IMR-90 (cell line): ENCODE measurements at regions of chr5 and their contacts with region 1.

Region 1: DNA sequence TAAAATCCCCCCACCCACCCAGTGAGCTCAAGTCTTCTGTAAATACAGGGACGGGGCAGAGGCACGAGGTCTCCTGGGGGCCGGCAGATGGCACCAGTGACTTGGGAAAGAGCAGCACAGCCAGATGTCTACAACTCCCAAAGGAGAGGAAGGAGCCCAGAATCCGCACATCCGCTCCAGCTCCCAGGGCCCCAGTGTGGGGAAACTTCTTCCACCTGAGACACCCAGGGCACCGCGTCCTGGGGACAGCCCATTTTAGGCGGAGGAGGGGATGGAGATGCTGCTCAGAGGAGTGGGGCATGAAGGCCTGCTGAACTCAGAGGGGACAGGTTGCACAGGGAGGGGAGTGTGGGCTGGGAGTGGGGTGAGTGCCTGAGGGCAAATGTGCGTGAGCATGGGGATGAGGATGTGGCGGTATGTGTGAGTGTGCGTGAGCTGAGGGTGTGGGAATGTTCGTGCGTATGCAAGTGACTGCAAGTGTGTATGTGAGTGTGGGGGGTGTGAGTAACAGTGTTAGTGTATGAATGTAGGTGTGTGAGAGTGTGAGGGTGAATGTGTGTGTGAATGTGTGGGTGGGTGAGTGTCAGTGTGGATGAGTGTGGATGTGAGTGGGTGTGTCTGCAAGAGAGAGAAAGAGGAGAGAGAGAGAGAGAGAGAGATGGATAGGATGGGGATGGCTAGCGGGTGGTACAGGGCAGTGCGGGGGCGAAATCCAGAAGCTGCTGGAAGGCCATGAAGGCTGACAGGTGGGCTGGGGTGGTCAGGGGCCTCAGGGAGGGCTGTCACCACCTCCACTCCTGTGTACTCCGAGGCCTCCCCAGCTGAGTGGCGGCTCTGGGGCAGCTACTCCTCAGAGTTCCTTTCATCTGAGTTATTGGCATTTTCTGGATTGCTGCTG is 63.5 kb downstream of the DUSP1 start:
- DNase-seq: peak; percentile 76
- ATAC-seq: peak; percentile 96
- H3K4me3 ChIP-seq: no peak overlapping the region
- H3K27ac ChIP-seq: no peak overlapping the region
- H3K4me1 ChIP-seq: peaks cover 4% of the 10 kb centered on the region
- H3K27me3 ChIP-seq: peaks cover 10% of the 10 kb centered on the region
- CTCF ChIP-seq: peak; percentile 72
- POLR2A ChIP-seq: no peak
- RAD21 ChIP-seq: peak; percentile 89

Region 2: GRCh38 chr5:172984243-172984953 is 276.9 kb after region 1 on chr5:
- CTCF ChIA-PET with region 1: interaction called, 3 read pairs
- POLR2A ChIA-PET with region 1: no interaction called
- dilution Hi-C with region 1: no loop called
- in situ Hi-C with region 1: no loop called
- intact Hi-C with region 1: loop called (anchors 5 kb)
- DNase-seq: peak; percentile 92
- ATAC-seq: peak; percentile 65
- H3K4me3 ChIP-seq: peak overlapping the region; percentile 86
- H3K27ac ChIP-seq: peak overlapping the region; percentile 92
- H3K4me1 ChIP-seq: peaks cover 2% of the 10 kb centered on the region; the same call in 1 of the 2 replicates
- H3K27me3 ChIP-seq: no peaks in the 10 kb centered on the region
- CTCF ChIP-seq: peak; percentile 66
- POLR2A ChIP-seq: peak; percentile 58; the same call in 1 of the 2 replicates
- RAD21 ChIP-seq: peak; percentile 79

Region 3: DNA sequence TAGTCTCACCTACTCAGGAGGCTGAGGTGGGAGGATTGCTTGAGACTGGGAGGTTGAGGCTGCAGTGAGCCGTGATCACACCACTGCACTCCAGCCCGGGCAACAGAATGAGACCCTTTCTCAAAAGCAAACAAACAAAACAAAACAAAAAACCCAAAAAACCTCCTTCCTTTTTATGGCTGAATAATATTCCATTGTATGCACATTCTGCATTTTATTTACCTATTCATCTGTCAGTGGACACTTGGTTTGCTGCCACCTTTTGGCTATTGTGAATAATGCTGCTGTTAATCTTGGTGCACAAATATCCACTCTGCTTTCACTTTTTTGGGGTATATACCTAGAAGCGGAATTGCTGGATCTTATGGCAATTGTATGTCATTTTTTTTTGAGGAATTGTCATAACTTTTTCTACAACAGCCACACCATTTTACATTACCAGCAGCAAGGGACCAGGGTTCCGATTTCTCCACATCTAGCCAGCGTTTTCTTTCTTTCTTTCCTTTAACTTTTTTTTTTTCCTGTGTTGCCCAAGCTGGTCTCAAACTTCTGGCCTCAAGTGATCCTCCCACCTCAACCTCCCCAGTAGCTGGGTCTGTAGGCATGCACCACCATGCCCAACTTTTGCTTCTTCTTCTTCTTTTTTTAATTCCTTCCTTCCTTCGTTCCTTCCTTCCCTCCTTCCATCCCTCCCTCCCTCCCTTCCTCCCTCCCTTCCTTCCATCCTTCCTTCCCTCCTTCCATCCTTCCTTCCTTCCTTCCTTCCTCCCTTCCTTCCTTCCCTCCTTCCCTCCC is 496.8 kb after region 1 on chr5:
- CTCF ChIA-PET with region 1: no interaction called
- POLR2A ChIA-PET with region 1: no interaction called
- dilution Hi-C with region 1: no loop called
- in situ Hi-C with region 1: no loop called
- intact Hi-C with region 1: loop called (anchors 2 kb)
- DNase-seq: peak; percentile 33
- ATAC-seq: no peak
- H3K4me3 ChIP-seq: no peak overlapping the region
- H3K27ac ChIP-seq: no peak overlapping the region
- H3K4me1 ChIP-seq: peaks cover 6% of the 10 kb centered on the region; the same call in 1 of the 2 replicates
- H3K27me3 ChIP-seq: peaks cover 48% of the 10 kb centered on the region
- CTCF ChIP-seq: peak; percentile 61
- POLR2A ChIP-seq: no peak
- RAD21 ChIP-seq: peak; percentile 49

Region 4: GRCh38 chr5:173293817-173294672 is 586.5 kb after region 1 on chr5:
- CTCF ChIA-PET with region 1: interaction called, 3 read pairs
- POLR2A ChIA-PET with region 1: no interaction called
- dilution Hi-C with region 1: no loop called
- in situ Hi-C with region 1: loop called (anchors 10 kb)
- intact Hi-C with region 1: no loop called
- DNase-seq: peak; percentile 80
- ATAC-seq: peak; percentile 84
- H3K4me3 ChIP-seq: no peak overlapping the region
- H3K27ac ChIP-seq: peak overlapping the region; percentile 29
- H3K4me1 ChIP-seq: peaks cover 17% of the 10 kb centered on the region
- H3K27me3 ChIP-seq: no peaks in the 10 kb centered on the region; the same call in 1 of the 2 replicates
- CTCF ChIP-seq: peak; percentile 96
- POLR2A ChIP-seq: peak; percentile 55; the same call in 1 of the 2 replicates
- RAD21 ChIP-seq: peak; percentile 96

Region 5: GRCh38 chr5:173615884-173616576 is 908.5 kb after region 1 on chr5:
- CTCF ChIA-PET with region 1: interaction called, 5 read pairs
- POLR2A ChIA-PET with region 1: no interaction called
- dilution Hi-C with region 1: no loop called
- in situ Hi-C with region 1: no loop called
- intact Hi-C with region 1: loop called (anchors 10 kb)
- DNase-seq: peak; percentile 85
- ATAC-seq: peak; percentile 61
- H3K4me3 ChIP-seq: peak overlapping the region; percentile 95
- H3K27ac ChIP-seq: peak overlapping the region; percentile 79
- H3K4me1 ChIP-seq: peaks cover 11% of the 10 kb centered on the region
- H3K27me3 ChIP-seq: no peaks in the 10 kb centered on the region
- CTCF ChIP-seq: peak; percentile 75
- POLR2A ChIP-seq: peak; percentile 68; the same call in 1 of the 2 replicates
- RAD21 ChIP-seq: peak; percentile 59